H1 (cell line): ENCODE measurements at regions of chr1 and their contacts with region 1.

Region 1: DNA sequence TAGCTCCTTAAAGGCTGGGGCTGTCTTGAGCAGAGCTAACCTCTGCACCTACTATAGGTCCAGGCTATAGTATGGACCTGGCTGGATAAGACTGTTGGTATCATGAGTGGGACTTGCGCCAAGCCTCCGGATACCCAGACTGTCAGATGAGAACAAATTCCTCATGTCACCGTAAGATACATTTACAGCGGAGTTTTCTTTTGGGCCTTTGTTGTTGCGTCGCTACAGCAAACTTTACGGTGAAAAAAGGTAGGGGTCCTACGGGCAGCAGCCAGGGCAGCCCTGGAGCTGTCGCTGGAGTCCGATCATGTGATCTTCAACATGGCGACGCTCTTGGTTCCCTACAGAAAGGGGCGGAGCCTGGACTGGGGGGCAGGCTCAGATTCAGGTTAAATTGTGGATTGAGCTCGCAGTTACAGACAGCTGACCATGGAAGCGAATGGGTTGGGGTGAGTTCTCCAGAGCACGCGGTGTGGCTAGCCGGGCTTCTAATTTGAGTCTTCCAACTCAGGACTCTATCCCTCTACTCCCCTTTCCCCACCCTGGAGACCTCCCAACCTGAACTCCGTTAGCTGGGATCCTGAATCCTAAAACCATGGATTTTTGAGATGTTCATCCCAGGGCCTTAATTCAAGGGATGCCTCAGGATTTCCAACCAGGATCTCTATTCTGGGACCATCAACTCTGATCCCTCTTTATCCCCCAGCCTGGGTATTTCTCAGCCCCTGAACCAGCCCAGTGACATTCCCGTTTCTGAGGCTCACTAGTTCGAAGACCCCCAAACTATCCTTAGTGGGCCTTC is at the start of gene UROD:
- DNase-seq: peak; percentile 91 to 94
- H3K4me3 ChIP-seq: peak within 1 kb of the TSS; percentile 64 to 89 (median 79)
- H3K27ac ChIP-seq: peak within 1 kb of the TSS; percentile 16; the same call in 1 of the 2 replicates
- H3K4me1 ChIP-seq: peaks cover 5 to 10% (median 6%) of the 10 kb centered on the region in 4 experiments; a peak in 6 of 7 replicates
- H3K27me3 ChIP-seq: no peaks in the 10 kb centered on the region
- CTCF ChIP-seq: no peak
- EP300 ChIP-seq: peak in 1 of 2 experiments; percentile 71; a peak in 1 of 3 replicates
- POLR2A ChIP-seq: peak in 1 of 2 experiments; percentile 86; a peak in 2 of 3 replicates
- RAD21 ChIP-seq: no peak; a peak in 1 of 4 replicates
- total RNA-seq, gene UROD: 86.6 TPM in 2 replicates

Region 2: DNA sequence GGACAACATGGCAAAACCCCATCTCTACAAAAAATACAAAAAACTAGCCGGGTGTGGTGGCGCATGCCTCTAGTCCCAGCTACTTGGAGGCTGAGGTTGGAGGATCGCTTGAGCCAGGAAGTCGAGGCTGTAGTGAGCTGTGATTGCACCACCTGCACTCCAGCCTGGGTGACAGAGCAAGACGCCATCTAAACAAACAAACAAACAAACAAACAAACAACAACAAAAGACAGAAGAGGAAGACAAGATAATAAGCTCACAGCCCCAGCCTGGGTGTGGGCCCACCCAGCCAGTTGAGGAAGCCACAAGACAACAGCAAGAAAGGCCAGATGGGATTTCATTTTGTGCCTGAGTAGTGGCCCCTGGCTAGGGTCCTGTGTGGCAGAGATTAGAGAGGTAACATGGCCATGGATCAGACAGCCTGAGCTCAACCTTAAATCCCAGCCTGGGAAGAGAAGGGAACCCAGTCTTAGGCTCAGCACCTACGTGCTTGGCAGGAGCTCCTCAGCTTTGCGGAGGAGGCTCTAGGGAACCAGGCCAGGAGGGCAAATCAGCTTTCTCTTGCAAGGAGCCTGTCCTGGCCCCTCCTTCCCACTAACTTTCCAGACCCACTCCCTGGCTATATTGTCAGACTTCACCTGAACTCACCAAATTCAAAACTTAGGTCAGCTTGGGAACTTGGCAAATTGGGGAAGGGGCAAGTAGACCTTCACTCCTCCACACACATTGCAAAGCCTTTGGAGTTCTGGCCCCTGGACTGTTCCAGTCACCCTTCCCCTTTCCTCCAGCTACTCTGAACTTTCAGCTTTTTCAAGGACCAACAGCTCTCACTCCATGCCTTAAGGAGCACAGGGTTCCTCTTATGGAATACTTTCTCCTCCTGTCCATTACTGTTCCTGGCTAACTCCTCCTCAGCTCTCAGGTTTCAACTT is 219.0 kb before region 1 on chr1:
- CTCF ChIA-PET with region 1: interaction called, 10 read pairs
- POLR2A ChIA-PET with region 1: no interaction called
- DNase-seq: no peak
- H3K4me3 ChIP-seq: no peak overlapping the region
- H3K27ac ChIP-seq: no peak overlapping the region; the same call in 1 of the 2 replicates
- H3K4me1 ChIP-seq: peaks cover 0 to 5% (median 5%) of the 10 kb centered on the region in 4 experiments
- H3K27me3 ChIP-seq: no peaks in the 10 kb centered on the region
- CTCF ChIP-seq: no peak
- EP300 ChIP-seq: no peak
- POLR2A ChIP-seq: no peak
- RAD21 ChIP-seq: no peak

Region 3: DNA sequence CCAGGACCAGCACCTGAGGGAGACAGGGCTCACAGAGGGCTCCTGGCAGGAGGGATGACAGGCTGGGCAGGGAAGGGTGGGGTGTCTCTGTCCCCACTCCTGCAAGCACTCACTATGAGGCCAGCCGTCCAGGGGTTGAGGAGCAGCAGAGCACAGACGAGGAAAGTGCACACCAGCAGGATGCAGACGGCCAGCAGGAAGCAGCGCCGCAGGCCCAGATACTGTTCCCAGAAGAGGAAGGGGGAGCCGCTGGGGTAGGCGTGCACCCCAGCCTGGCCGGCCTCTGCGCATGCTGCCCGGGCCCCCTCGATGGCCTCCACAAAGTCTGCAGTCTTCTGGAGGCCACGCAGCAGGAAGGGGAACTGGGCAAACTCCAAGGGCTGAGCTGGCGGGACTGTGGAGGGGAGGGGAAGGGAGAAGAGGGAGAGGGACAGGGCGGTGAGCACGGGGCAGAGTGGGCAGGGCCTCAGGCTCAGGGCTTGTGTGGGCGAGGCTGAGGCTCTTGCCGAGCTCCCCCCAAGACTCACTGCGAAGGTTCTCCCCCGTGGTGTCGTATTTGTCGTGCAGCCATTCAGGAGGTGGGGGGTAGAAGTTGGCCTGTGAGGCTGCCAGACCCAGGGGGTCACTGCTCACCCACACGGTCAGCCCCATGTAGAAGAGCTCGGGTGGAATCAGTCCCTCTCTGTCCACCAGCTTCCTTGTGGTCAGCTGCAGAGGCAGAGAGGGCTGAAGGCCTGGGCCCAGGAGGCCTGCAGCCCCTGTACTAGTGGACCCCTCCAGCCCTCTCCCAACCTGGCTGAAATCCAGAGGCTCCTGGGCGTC is 185.5 kb before region 1 on chr1:
- CTCF ChIA-PET with region 1: interaction called, 36 read pairs
- POLR2A ChIA-PET with region 1: interaction called, 26 read pairs
- DNase-seq: no peak
- H3K4me3 ChIP-seq: no peak overlapping the region
- H3K27ac ChIP-seq: no peak overlapping the region
- H3K4me1 ChIP-seq: peaks cover 0 to 9% (median 2%) of the 10 kb centered on the region in 4 experiments; a peak in 6 of 7 replicates
- H3K27me3 ChIP-seq: no peaks in the 10 kb centered on the region
- CTCF ChIP-seq: no peak
- EP300 ChIP-seq: no peak
- POLR2A ChIP-seq: no peak
- RAD21 ChIP-seq: no peak

Region 4: GRCh38 chr1:44973645-44974044 is 38.4 kb before region 1 on chr1:
- CTCF ChIA-PET with region 1: no interaction called
- POLR2A ChIA-PET with region 1: no interaction called
- DNase-seq: no peak
- H3K4me3 ChIP-seq: no peak overlapping the region
- H3K27ac ChIP-seq: no peak overlapping the region
- H3K4me1 ChIP-seq: no peaks in the 10 kb centered on the region
- H3K27me3 ChIP-seq: no peaks in the 10 kb centered on the region
- CTCF ChIP-seq: no peak
- EP300 ChIP-seq: no peak
- POLR2A ChIP-seq: no peak
- RAD21 ChIP-seq: no peak

Region 5: DNA sequence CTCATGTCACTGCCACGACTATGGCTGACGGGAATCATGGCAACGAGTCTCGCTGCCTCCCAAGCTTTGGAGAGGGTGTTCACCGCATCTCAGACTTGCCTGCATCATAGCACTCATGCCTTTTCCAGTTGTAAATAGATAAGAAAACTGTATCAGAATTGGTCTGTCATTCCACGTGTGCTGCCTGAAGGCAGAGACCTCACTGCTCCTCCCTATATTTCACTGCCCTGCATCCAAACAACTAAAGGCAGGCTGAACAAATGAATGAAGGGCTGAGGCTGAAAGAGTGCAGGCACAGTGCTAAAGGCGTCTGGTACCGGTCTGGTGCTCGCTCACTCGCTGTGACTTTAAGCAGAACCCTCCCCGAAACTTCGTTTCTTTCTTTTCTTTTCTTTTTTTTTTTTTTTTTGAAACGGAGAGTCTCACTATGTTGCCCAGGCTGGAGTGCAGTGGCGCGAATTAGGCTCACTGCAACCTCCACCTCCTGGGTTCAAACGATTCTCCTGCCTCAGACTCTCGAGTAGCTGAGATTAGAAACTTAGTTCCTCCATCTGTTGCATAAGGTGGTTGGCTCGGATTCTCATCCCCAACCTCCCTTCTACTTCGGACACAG is 26.2 kb before region 1 on chr1:
- CTCF ChIA-PET with region 1: interaction called, 15 read pairs
- POLR2A ChIA-PET with region 1: interaction called, 13 read pairs
- DNase-seq: no peak
- H3K4me3 ChIP-seq: peak overlapping the region; percentile 86 to 94 (median 90)
- H3K27ac ChIP-seq: no peak overlapping the region
- H3K4me1 ChIP-seq: peaks cover 0 to 3% (median 3%) of the 10 kb centered on the region in 4 experiments; a peak in 5 of 7 replicates
- H3K27me3 ChIP-seq: no peaks in the 10 kb centered on the region
- CTCF ChIP-seq: no peak
- EP300 ChIP-seq: no peak
- POLR2A ChIP-seq: no peak
- RAD21 ChIP-seq: no peak

Region 6: DNA sequence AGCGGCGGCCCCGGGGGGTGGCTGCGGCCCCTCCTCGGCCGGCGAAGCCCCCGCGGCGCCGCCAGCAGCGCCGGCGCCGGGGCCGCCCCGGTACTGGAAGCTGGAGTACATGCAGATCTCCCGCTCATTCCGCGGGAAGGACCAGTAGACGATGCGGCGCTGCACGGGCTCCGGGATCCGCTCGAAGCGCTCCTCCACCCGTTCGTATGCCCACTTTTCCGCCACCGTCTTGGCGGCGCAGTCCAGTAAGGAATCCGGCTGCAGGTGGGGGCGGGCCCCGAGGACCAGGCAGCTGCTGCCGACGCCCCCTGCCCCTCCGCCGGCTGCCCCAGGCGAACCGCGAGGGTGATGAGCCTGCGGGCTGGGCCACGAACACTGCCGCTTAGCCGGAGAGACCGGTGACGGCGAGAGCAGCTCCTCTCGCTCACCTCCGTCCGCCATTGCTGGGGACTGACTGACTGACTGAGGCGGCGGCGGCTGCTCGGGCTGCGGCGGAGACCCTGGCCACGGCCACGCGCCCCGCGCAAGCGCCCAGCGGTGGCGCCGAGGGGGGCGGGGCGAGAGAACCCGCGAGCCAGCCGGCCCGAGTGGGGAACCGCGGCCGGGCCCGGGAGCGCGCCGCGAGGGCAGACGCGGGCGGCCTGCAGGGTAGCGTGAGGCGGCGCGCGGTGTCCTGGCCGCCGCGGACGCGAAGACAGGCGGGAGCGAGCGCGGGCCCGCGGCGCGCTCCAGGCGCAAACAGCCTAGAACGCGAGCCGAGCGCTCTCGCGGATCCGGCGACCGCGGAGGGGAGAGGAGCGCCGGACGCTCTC is 194.1 kb after region 1 on chr1 and contains the start of gene ZSWIM5:
- CTCF ChIA-PET with region 1: interaction called, 5 read pairs
- POLR2A ChIA-PET with region 1: interaction called, 13 read pairs
- DNase-seq: peak in 1 of 2 experiments; percentile 83
- H3K4me3 ChIP-seq: peak within 1 kb of the TSS; percentile 71 to 92 (median 88)
- H3K27ac ChIP-seq: peak within 1 kb of the TSS; percentile 61; the same call in 1 of the 2 replicates
- H3K4me1 ChIP-seq: no peaks in the 10 kb centered on the region; a peak in 1 of 7 replicates
- H3K27me3 ChIP-seq: peaks cover 2 to 25% (median 17%) of the 10 kb centered on the region in 4 experiments
- CTCF ChIP-seq: no peak
- EP300 ChIP-seq: no peak
- POLR2A ChIP-seq: no peak
- RAD21 ChIP-seq: no peak
- total RNA-seq, gene ZSWIM5: 2.4 and 2.5 TPM in 2 replicates

Region 7: DNA sequence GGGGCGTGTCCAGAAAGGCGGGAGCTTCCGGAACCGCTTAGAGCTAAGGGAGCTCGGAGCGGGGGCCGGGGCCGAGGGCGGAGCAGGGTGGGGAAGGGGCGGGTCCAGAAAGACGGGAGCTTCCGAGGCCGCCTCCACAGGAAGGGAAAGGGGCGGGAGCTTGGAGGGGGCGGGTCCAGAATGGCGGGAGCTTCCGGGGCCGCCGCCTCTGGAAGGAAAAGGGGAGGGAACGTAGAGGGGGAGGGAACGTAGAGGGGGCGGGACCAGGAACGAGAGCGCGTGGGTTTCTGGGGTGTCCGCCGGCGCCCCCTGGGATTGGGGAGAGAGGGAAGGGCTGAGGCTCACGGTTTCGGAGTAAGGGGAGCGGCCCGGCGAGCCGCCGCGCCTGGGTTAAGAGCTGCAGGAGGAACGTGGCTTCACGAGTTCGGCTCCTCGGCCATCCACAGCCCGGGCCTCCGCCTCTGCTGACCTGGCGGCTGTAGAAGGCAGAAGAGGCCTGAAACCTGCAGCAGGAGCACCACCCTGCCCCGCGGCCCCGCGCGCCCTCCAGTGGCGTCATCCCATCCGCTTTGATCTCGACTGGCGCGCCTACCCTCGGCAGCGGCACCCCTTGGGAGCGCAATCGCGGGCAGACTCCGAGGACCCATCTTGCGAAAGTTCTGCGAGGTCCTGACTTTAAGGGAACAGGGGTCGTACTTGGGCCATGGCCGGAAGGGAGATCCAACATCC is 291.7 kb after region 1 on chr1:
- CTCF ChIA-PET with region 1: interaction called, 424 read pairs
- POLR2A ChIA-PET with region 1: interaction called, 11 read pairs
- DNase-seq: peak; percentile 91 to 94
- H3K4me3 ChIP-seq: peak overlapping the region; percentile 63 to 76 (median 74)
- H3K27ac ChIP-seq: peak overlapping the region; percentile 93
- H3K4me1 ChIP-seq: peaks cover 13 to 24% (median 15%) of the 10 kb centered on the region in 4 experiments
- H3K27me3 ChIP-seq: no peaks in the 10 kb centered on the region
- CTCF ChIP-seq: peak; percentile 61 to 85 (median 74)
- EP300 ChIP-seq: no peak
- POLR2A ChIP-seq: peak; percentile 91 to 97
- RAD21 ChIP-seq: peak; percentile 58 to 64

Region 8: GRCh38 chr1:45339789-45340570 is 327.9 kb after region 1 on chr1 and contains the starts of genes MUTYH and TOE1:
- CTCF ChIA-PET with region 1: interaction called, 11 read pairs
- POLR2A ChIA-PET with region 1: interaction called, 24 read pairs
- DNase-seq: peak; percentile 88 to 95
- H3K4me3 ChIP-seq: peak within 1 kb of the TSS; percentile 84 to 97 (median 92)
- H3K27ac ChIP-seq: peak within 1 kb of the TSS; percentile 97
- H3K4me1 ChIP-seq: peaks cover 0 to 9% (median 6%) of the 10 kb centered on the region in 4 experiments; a peak in 6 of 7 replicates
- H3K27me3 ChIP-seq: no peaks in the 10 kb centered on the region
- CTCF ChIP-seq: no peak
- EP300 ChIP-seq: no peak
- POLR2A ChIP-seq: peak; percentile 94 to 96
- RAD21 ChIP-seq: no peak
- total RNA-seq, gene MUTYH: 51.9 TPM in 2 replicates
- total RNA-seq, gene TOE1: 14.5 and 15.2 TPM in 2 replicates